ENCODE measurements at regions of chr1 and their contacts with region 1.

Region 1: GRCh38 chr1:97674517-97674916 is 246.3 kb downstream of the DPYD start:
- DNase-seq: no peak
- ATAC-seq: no peak
- H3K4me3 Mint-ChIP-seq: no peak overlapping the region
- H3K27ac Mint-ChIP-seq: no peak overlapping the region
- H3K4me1 Mint-ChIP-seq: no peaks in the 10 kb centered on the region
- H3K27me3 Mint-ChIP-seq: no peaks in the 10 kb centered on the region
- CTCF ChIP-seq: no peak

Region 2: GRCh38 chr1:98053471-98054366 is 379.2 kb after region 1 on chr1:
- CTCF ChIA-PET with region 1: interaction called, 3 read pairs
- POLR2A ChIA-PET with region 1: no interaction called
- intact Hi-C with region 1: loop called (anchors 5 kb)
- DNase-seq: peak; percentile 58
- ATAC-seq: peak; percentile 93
- H3K4me3 Mint-ChIP-seq: peak overlapping the region; percentile 65
- H3K27ac Mint-ChIP-seq: no peak overlapping the region
- H3K4me1 Mint-ChIP-seq: peaks cover 18% of the 10 kb centered on the region
- H3K27me3 Mint-ChIP-seq: peaks cover 55% of the 10 kb centered on the region
- CTCF ChIP-seq: peak; percentile 98